AG04450 (cell line): ENCODE measurements at regions of chr11 and their contacts with region 1.

Region 1: GRCh38 chr11:72413914-72414628 is 20.3 kb downstream of the CLPB start:
- DNase-seq: peak; percentile 51
- H3K4me3 ChIP-seq: no peak overlapping the region
- H3K27ac ChIP-seq: no peak overlapping the region
- H3K27me3 ChIP-seq: no peaks in the 10 kb centered on the region
- CTCF ChIP-seq: peak; percentile 78

Region 2: DNA sequence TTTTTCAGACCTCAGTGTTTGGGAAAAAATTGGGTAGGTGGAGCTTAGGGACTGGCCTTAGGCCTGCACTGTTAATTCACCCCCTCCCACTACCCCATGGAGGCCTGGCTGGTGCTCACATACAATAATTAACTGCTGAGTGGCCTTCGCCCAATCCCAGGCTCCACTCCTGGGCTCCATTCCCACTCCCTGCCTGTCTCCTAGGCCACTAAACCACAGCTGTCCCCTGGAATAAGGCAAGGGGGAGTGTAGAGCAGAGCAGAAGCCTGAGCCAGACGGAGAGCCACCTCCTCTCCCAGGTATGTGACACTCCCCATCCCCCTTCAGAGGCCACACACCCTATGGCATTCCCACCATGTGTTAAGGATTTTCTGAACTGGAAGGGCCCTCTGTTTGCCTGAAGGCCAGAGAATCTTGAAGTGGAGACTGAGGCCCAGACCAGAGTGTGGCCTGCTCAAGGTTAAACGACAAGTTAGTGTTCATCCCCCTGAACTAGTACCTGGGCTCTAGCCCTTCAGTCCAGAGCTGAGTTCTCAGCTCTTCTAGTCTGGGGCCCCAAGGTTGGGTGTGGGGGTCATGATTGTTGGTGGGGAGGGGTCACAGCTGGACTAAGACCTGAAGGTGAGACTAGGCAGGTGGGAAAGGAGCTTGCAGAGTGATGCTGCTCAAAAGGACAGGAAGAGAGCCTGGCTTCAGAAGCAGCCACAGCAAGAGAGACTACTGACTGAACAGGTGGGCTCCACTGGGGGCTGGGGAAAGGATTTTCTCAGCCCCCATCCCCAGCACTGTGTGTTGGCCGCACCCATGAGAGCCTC is 224.4 kb before region 1 on chr11:
- CTCF ChIA-PET with region 1: interaction called, 14 read pairs
- POLR2A ChIA-PET with region 1: no interaction called
- DNase-seq: no peak
- H3K4me3 ChIP-seq: no peak overlapping the region
- H3K27ac ChIP-seq: no peak overlapping the region
- H3K27me3 ChIP-seq: no peaks in the 10 kb centered on the region
- CTCF ChIP-seq: no peak

Region 3: DNA sequence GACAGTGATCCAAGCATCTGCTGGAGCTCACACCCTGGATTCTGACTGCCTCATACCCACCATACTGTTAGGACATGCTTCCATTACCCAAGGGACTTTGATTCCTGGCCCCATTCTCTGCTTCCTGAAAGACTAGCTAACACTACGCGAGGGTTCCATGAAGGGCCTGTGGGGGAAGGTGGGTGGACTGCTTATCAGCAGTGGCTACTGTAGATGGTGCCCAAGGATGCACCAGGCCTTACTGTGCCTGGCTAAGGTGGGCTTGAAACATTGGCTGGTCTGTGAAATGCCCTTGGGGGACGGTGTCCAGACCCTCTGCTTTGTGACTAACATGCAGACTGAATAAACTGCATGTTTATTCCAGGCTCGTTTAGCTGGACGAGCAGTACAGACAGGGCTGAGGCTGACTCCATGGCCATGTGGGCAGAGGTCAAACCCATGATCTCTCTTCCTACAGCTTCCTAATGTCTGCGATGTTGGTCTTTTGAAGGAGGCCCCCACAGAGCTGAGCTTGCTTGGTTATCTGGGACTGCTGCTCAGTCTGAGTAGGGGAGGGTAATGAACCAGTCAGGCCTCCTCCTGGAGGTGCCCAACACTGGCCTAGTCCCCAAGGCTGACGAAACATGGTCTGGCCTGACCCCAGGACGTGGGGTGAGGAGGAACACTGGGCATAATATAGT is 121.8 kb before region 1 on chr11:
- CTCF ChIA-PET with region 1: interaction called, 15 read pairs
- POLR2A ChIA-PET with region 1: no interaction called
- DNase-seq: no peak
- H3K4me3 ChIP-seq: no peak overlapping the region
- H3K27ac ChIP-seq: no peak overlapping the region
- H3K27me3 ChIP-seq: no peaks in the 10 kb centered on the region
- CTCF ChIP-seq: no peak

Region 4: DNA sequence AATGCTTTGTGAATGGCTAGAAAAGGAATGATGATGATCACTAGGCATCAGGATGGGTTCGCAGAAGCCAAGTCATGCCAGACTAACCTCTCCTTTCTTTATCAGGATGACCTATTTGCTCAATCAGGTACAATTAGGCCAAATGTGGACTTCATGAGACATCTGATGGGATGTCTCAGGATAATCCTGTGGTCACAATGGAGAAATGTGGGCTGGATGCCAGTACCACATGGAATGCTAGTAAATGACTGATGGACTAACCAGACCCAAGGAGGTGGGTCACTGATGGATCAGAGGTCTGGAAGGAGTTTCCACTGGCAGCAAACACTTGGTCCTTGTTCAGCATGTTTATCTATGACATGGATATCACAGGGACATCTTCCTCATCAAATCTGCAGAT is 75.3 kb before region 1 on chr11:
- CTCF ChIA-PET with region 1: no interaction called
- POLR2A ChIA-PET with region 1: no interaction called
- DNase-seq: no peak
- H3K4me3 ChIP-seq: no peak overlapping the region
- H3K27ac ChIP-seq: no peak overlapping the region
- H3K27me3 ChIP-seq: no peaks in the 10 kb centered on the region
- CTCF ChIP-seq: no peak

Region 5: DNA sequence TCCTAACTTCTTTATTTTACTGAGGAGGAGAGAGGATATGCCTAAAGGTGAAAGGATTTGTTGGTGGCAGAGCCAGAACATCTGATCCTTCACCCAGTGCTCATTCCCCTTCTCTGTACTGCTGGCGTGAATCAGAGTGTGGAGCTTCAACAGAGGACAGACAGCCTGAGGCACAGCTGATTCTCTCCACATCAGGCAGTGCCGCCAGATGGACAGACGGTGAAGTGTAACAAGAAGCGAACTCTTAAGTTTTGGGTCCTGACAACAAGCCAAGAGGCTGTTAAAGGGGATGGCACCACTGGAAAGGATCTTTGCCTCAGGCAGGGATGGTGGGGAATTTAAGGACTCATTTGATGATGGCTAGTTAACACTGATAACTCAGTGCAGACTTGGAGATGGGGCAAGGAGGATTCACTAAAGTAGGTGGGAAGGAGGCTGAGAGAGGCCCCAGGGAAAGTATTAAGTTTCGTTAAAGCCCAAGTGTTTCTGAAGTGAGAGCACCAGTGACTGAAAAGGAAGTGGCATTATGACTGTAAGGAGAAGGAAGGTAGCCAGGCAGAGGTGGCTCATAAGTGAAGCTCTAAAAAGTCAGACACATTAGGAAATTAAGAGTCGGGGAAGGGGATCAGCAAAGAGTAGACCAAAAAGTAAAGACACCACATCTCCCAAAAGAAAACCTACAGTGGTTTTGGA is 61.1 kb before region 1 on chr11:
- CTCF ChIA-PET with region 1: interaction called, 11 read pairs
- POLR2A ChIA-PET with region 1: no interaction called
- DNase-seq: peak; percentile 67
- H3K4me3 ChIP-seq: no peak overlapping the region
- H3K27ac ChIP-seq: no peak overlapping the region
- H3K27me3 ChIP-seq: no peaks in the 10 kb centered on the region
- CTCF ChIP-seq: peak; percentile 79

Region 6: DNA sequence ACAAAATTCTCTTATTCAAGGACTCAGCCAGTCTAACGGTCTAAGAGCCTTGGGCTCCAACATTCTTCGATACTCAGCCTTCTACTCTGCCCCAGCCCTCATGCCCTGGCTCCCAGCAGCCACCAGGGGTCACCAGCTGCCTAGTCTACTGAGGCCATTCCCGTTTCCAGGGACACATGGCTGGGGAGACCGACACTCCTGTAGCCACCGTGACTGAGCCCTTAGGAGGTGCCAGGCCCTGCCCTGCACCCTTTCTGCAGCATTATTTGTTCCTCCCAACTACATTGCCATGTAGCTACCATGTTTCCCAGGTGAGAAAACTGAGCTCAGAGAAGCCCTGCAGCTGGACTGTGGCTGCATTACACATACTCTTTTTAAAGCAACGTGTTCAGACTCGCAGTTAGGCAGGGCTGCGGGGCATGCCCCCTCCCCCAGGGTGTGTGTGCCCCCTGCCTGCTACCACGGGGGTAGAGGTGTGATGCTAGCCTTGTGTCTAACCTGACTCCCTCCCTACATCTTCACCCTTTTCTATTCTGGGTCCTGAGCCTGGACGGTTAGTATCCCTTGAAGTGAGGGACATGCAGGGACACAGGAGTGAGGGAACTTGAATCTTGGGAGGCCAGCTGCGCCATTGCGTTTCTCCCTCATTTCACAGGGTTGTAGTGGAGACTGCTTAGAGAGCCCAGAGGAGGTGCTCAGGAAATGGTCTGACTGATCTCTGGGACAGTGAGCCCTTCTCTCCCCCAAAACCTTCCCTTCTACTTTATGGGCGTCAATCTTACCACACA is 417.6 kb after region 1 on chr11:
- CTCF ChIA-PET with region 1: no interaction called
- POLR2A ChIA-PET with region 1: no interaction called
- DNase-seq: no peak
- H3K4me3 ChIP-seq: no peak overlapping the region
- H3K27ac ChIP-seq: no peak overlapping the region
- H3K27me3 ChIP-seq: no peaks in the 10 kb centered on the region
- CTCF ChIP-seq: peak; percentile 98